Activated B cell treated with CpG ODN at 0.5 μM for 24 hours (primary cell): ENCODE measurements at regions of chr4 and their contacts with region 1.

Region 1: GRCh38 chr4:128574706-128575105 is 234.8 kb upstream of the JADE1 start:
- DNase-seq: peak; percentile 20
- ATAC-seq: peak; percentile 45
- H3K4me3 Mint-ChIP-seq: no peak overlapping the region
- H3K27ac Mint-ChIP-seq: no peak overlapping the region
- H3K4me1 Mint-ChIP-seq: no peaks in the 10 kb centered on the region
- H3K27me3 Mint-ChIP-seq: no peaks in the 10 kb centered on the region
- CTCF ChIP-seq: no peak

Region 2: DNA sequence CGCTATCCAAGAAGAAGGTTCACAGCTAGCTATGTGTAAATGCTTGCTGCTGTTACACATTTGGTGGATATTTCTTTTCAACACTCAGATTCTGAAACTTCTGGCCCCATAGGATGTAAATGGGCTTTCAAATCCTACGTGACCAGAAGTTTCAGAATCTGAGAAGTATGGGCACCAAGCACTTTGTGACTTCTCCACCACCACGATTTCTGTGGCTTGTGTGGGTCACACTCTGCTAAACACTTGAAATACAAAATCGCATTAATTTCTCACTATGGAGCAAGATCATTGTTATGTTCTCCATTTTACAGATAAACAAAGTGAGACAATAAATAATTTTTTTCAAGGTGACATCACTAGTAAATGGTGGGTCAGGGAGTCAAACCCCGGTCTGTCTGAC is 24.6 kb before region 1 on chr4:
- CTCF ChIA-PET with region 1: no interaction called
- POLR2A ChIA-PET with region 1: no interaction called
- intact Hi-C with region 1: no loop called
- DNase-seq: no peak
- ATAC-seq: no peak
- H3K4me3 Mint-ChIP-seq: no peak overlapping the region
- H3K27ac Mint-ChIP-seq: no peak overlapping the region
- H3K4me1 Mint-ChIP-seq: peaks cover 13% of the 10 kb centered on the region
- H3K27me3 Mint-ChIP-seq: peaks cover 12% of the 10 kb centered on the region
- CTCF ChIP-seq: no peak

Region 3: GRCh38 chr4:128675083-128675482 is 100.4 kb after region 1 on chr4:
- CTCF ChIA-PET with region 1: interaction called, 4 read pairs
- POLR2A ChIA-PET with region 1: no interaction called
- intact Hi-C with region 1: loop called (anchors 2 kb)
- DNase-seq: no peak
- ATAC-seq: peak; percentile 73
- H3K4me3 Mint-ChIP-seq: peak overlapping the region; percentile 55
- H3K27ac Mint-ChIP-seq: peak overlapping the region; percentile 71
- H3K4me1 Mint-ChIP-seq: peaks cover 25% of the 10 kb centered on the region
- H3K27me3 Mint-ChIP-seq: no peaks in the 10 kb centered on the region
- CTCF ChIP-seq: no peak

Region 4: GRCh38 chr4:128793859-128794672 is 219.4 kb after region 1 on chr4:
- CTCF ChIA-PET with region 1: no interaction called
- POLR2A ChIA-PET with region 1: no interaction called
- intact Hi-C with region 1: no loop called
- DNase-seq: no peak
- ATAC-seq: no peak
- H3K4me3 Mint-ChIP-seq: no peak overlapping the region
- H3K27ac Mint-ChIP-seq: no peak overlapping the region
- H3K4me1 Mint-ChIP-seq: no peaks in the 10 kb centered on the region
- H3K27me3 Mint-ChIP-seq: peaks cover 2% of the 10 kb centered on the region
- CTCF ChIP-seq: no peak